ENCODE measurements at regions of chr19 and their contacts with region 1.

Region 1: GRCh38 chr19:54297760-54298305 is 15.1 kb downstream of the LILRA5 start:
- DNase-seq: no peak
- H3K4me3 Mint-ChIP-seq: no peak overlapping the region
- H3K27ac Mint-ChIP-seq: no peak overlapping the region
- H3K4me1 Mint-ChIP-seq: peaks cover 2% of the 10 kb centered on the region
- H3K27me3 Mint-ChIP-seq: peaks cover 49% of the 10 kb centered on the region

Region 2: DNA sequence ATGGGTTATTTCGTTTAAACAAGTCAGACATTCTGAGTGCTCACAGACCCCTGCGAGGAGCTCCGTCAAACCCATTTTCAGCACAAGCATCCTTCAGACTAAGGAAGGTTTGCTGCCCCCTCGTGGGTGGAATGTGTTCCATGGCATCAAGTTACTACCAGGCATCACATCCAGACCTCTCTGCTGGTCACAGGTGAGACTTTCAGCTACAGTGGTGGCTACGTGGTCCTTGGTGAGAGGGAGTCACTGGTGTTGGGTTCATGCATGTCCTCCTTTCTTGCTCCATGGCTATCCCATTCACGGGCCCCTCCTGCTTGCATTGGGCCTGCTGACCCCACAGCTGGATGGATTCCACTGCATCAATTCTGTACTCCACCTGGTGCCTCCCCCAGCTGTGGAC is 31.7 kb before region 1 on chr19:
- CTCF ChIA-PET with region 1: interaction called, 16 read pairs
- DNase-seq: peak; percentile 84
- H3K4me3 Mint-ChIP-seq: no peak overlapping the region
- H3K27ac Mint-ChIP-seq: no peak overlapping the region
- H3K4me1 Mint-ChIP-seq: no peaks in the 10 kb centered on the region
- H3K27me3 Mint-ChIP-seq: peaks cover 27% of the 10 kb centered on the region